A673 (cell line): ENCODE measurements at regions of chr7 and their contacts with region 1.

Region 1: DNA sequence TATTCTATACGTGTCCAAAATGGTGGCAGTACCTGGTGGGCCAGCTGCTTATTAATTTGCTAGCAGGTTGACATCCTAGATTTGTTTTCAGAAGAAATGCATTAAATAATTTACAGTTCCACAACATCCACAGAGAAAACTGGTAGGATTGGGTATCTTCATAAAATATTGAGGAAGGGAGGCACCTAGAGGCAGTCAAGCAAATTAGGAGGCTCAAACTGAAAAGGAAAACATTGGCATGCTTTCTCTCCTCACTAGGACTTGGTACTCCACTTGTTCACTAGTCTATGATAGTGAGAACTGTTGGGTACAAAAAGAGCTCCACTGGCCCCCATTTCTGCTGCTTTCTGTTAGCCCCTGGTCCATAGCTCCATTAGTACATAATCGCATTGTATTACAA is 18.3 kb upstream of the LRGUK start:
- DNase-seq: no peak
- H3K4me3 ChIP-seq: no peak overlapping the region
- H3K27ac ChIP-seq: no peak overlapping the region
- H3K4me1 ChIP-seq: no peaks in the 10 kb centered on the region
- H3K27me3 ChIP-seq: no peaks in the 10 kb centered on the region
- CTCF ChIP-seq: peak; percentile 28; the same call in 1 of the 2 replicates

Region 2: DNA sequence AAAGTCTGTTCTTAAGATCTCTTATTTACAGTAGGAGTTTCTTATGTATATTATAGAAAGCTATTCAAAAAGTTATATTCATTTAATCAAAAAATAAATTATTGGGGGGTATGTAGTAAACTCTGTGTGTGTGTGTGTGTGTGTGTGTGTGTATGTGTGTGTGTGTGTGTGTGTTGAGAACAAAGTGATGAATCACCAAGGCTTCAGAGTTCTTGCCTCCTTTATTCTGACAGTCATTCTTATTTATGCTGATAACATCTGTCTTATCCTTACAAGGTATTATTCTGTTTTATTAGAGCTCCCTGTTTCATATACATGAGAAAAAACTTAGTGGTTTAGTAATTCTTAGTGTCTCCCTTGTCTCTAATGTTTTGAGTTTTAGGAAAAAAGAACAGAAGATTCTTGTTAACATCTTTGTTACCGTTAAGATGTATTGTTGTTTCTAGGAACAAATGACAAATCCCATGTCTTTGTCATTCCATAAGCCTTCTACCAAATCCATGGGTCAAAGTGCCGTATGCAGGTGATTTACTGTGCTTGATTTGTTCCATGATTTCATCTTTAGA is 431.9 kb before region 1 on chr7:
- CTCF ChIA-PET with region 1: no interaction called
- POLR2A ChIA-PET with region 1: interaction called, 11 read pairs
- intact Hi-C with region 1: no loop called
- DNase-seq: no peak
- H3K4me3 ChIP-seq: no peak overlapping the region
- H3K27ac ChIP-seq: no peak overlapping the region
- H3K4me1 ChIP-seq: no peaks in the 10 kb centered on the region
- H3K27me3 ChIP-seq: no peaks in the 10 kb centered on the region
- CTCF ChIP-seq: no peak